ENCODE measurements at regions of chr3 and their contacts with region 1.

Region 1: GRCh38 chr3:129824926-129825541 is 68.5 kb downstream of the TMCC1 start:
- DNase-seq: peak; percentile 51
- H3K4me3 ChIP-seq: no peak overlapping the region
- H3K27ac ChIP-seq: no peak overlapping the region
- H3K4me1 ChIP-seq: peaks cover 0 to 6% of the 10 kb centered on the region in 2 experiments; a peak in 3 of 4 replicates
- H3K27me3 ChIP-seq: no peaks in the 10 kb centered on the region
- CTCF ChIP-seq: peak; percentile 76
- EP300 ChIP-seq: no peak
- RAD21 ChIP-seq: peak; percentile 84

Region 2: GRCh38 chr3:128984596-128984995 is 840.4 kb before region 1 on chr3:
- CTCF ChIA-PET with region 1: no interaction called
- POLR2A ChIA-PET with region 1: no interaction called
- DNase-seq: no peak
- H3K4me3 ChIP-seq: no peak overlapping the region
- H3K27ac ChIP-seq: no peak overlapping the region
- H3K4me1 ChIP-seq: peaks cover 0 to 10% of the 10 kb centered on the region in 2 experiments; a peak in 1 of 4 replicates
- H3K27me3 ChIP-seq: no peaks in the 10 kb centered on the region; the same call in 1 of the 2 replicates
- CTCF ChIP-seq: no peak
- EP300 ChIP-seq: no peak
- RAD21 ChIP-seq: no peak

Region 3: GRCh38 chr3:129633751-129634392 is 191.2 kb before region 1 on chr3:
- CTCF ChIA-PET with region 1: interaction called, 12 read pairs
- POLR2A ChIA-PET with region 1: no interaction called
- DNase-seq: peak; percentile 16
- H3K4me3 ChIP-seq: no peak overlapping the region
- H3K27ac ChIP-seq: no peak overlapping the region
- H3K4me1 ChIP-seq: no peaks in the 10 kb centered on the region
- H3K27me3 ChIP-seq: no peaks in the 10 kb centered on the region
- CTCF ChIP-seq: no peak
- EP300 ChIP-seq: no peak
- RAD21 ChIP-seq: no peak

Region 4: GRCh38 chr3:129650256-129650872 is 174.7 kb before region 1 on chr3:
- CTCF ChIA-PET with region 1: interaction called, 43 read pairs
- POLR2A ChIA-PET with region 1: no interaction called
- DNase-seq: peak; percentile 58
- H3K4me3 ChIP-seq: peak overlapping the region in 1 of 2 experiments; percentile 27; a peak in 1 of 4 replicates
- H3K27ac ChIP-seq: peak overlapping the region; percentile 28 to 52; a peak in 2 of 4 replicates
- H3K4me1 ChIP-seq: peaks cover 8 to 24% of the 10 kb centered on the region in 2 experiments
- H3K27me3 ChIP-seq: no peaks in the 10 kb centered on the region
- CTCF ChIP-seq: peak; percentile 76
- EP300 ChIP-seq: no peak
- RAD21 ChIP-seq: peak; percentile 91

Region 5: DNA sequence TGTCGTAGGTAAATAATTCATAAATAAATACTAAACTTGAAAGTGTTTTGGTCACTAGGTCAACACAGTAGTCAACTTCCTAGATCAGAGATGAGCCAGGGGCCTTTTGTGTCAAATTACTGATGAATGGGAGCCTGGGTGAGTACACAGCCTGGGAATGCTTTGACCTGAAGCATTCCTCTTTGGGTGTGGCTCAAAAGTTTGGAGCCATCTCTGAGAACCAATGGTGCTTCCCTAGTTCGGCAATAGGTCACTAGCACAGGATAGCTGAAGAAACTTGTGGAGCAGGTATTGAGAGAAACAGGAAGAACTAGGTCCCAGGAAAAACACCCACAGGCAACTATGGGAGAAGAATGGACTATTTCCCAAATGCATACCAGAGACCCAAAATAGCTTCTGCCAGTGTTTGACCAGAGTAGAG is 162.0 kb before region 1 on chr3:
- CTCF ChIA-PET with region 1: interaction called, 18 read pairs
- POLR2A ChIA-PET with region 1: no interaction called
- DNase-seq: no peak
- H3K4me3 ChIP-seq: no peak overlapping the region
- H3K27ac ChIP-seq: peak overlapping the region in 1 of 2 experiments; percentile 77; a peak in 1 of 4 replicates
- H3K4me1 ChIP-seq: peaks cover 2 to 37% of the 10 kb centered on the region in 2 experiments; a peak in 3 of 4 replicates
- H3K27me3 ChIP-seq: no peaks in the 10 kb centered on the region
- CTCF ChIP-seq: no peak
- EP300 ChIP-seq: no peak
- RAD21 ChIP-seq: no peak

Region 6: GRCh38 chr3:130093741-130094391 is 268.8 kb after region 1 on chr3:
- CTCF ChIA-PET with region 1: no interaction called
- POLR2A ChIA-PET with region 1: no interaction called
- DNase-seq: no peak
- H3K4me3 ChIP-seq: no peak overlapping the region
- H3K27ac ChIP-seq: no peak overlapping the region
- H3K4me1 ChIP-seq: no peaks in the 10 kb centered on the region; a peak in 1 of 4 replicates
- H3K27me3 ChIP-seq: no peaks in the 10 kb centered on the region
- CTCF ChIP-seq: no peak
- EP300 ChIP-seq: no peak
- RAD21 ChIP-seq: no peak

Measured in SK-N-SH (cell line).